ENCODE measurements at regions of chr6 and their contacts with region 1.

Region 1: DNA sequence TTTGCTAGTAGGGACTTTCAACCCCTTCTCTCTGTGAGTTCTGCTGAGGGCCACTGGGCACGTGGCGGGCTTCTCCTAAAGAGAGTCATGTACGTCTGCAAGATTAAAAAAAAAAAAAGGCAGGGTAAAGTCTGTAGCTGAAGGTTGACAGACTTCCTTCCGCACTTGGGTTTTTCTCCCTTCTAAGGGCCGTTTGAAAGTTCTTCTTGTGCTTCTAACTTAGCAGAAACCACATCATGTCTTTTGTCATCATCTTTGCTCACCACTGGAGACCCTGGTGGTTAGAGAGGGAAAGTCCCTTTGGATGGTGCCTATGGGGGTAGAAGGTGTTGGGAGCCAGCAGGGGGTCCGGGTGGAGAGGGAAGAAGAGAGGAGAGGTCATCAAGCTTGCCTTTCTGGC is 31.4 kb downstream of the PRDM1 start:
- DNase-seq: peak in 1 of 2 donors; percentile 90
- ATAC-seq: peak; percentile 86 to 92 (median 90)
- H3K4me3 ChIP-seq: no peak overlapping the region
- H3K4me3 Mint-ChIP-seq: peak overlapping the region; percentile 65
- H3K27ac ChIP-seq: peak overlapping the region; percentile 69
- H3K27ac Mint-ChIP-seq: peak overlapping the region; percentile 95
- H3K4me1 ChIP-seq: peaks cover 59% of the 10 kb centered on the region
- H3K4me1 Mint-ChIP-seq: peaks cover 59 to 66% of the 10 kb centered on the region in 2 donors
- H3K27me3 ChIP-seq: no peaks in the 10 kb centered on the region
- H3K27me3 Mint-ChIP-seq: no peaks in the 10 kb centered on the region
- CTCF ChIP-seq: no peak

Region 2: DNA sequence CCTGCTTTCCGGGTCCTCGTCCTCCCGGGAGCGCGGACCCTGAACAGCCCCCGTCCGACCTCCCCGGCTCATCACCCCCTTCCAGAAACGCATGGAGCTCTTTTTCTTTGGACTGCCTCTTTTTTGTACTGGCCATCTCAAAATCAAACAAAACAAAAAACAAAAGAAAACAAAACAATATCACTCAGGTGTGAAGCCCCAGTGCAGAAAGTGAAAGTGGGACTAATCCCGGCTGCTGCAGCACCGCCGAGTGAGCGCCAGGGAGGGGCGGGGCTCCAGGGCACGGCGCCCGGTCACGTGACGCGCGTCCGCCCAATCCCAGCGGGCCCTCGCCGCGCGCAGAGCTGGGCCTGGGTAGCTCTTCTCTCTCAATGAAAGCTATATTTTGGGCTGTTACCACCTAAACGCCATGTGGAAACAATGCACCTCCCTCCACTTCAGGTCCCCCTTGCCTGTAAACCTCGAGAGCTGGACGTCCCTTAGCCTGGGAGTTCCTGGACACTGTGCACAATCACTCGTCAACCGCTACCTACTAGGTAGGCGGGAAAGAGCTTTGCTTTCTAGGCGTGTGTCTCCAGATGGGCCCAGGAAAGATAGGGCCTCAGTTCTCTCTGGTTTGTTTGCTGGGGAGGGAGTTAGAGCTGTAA is 125.1 kb before region 1 on chr6:
- intact Hi-C with region 1: no loop called
- DNase-seq: peak; percentile 83 to 95
- ATAC-seq: peak; percentile 83 to 91 (median 90)
- H3K4me3 ChIP-seq: peak overlapping the region; percentile 88
- H3K4me3 Mint-ChIP-seq: peak overlapping the region; percentile 99
- H3K27ac ChIP-seq: peak overlapping the region; percentile 67
- H3K27ac Mint-ChIP-seq: peak overlapping the region; percentile 86 to 89
- H3K4me1 ChIP-seq: peaks cover 35% of the 10 kb centered on the region
- H3K4me1 Mint-ChIP-seq: peaks cover 33% of the 10 kb centered on the region in 2 donors
- H3K27me3 ChIP-seq: peaks cover 40% of the 10 kb centered on the region
- H3K27me3 Mint-ChIP-seq: peaks cover 53 to 66% of the 10 kb centered on the region in 2 donors
- CTCF ChIP-seq: no peak

Region 3: GRCh38 chr6:106069478-106069877 is 48.1 kb before region 1 on chr6:
- intact Hi-C with region 1: no loop called
- DNase-seq: no peak
- ATAC-seq: no peak
- H3K4me3 ChIP-seq: no peak overlapping the region
- H3K4me3 Mint-ChIP-seq: no peak overlapping the region
- H3K27ac ChIP-seq: no peak overlapping the region
- H3K27ac Mint-ChIP-seq: no peak overlapping the region
- H3K4me1 ChIP-seq: no peaks in the 10 kb centered on the region
- H3K4me1 Mint-ChIP-seq: no peaks in the 10 kb centered on the region
- H3K27me3 ChIP-seq: no peaks in the 10 kb centered on the region
- H3K27me3 Mint-ChIP-seq: peaks cover 9 to 11% of the 10 kb centered on the region in 2 donors
- CTCF ChIP-seq: no peak

Region 4: GRCh38 chr6:106128981-106129781 is 11.6 kb after region 1 on chr6:
- intact Hi-C with region 1: no loop called
- DNase-seq: no peak
- ATAC-seq: no peak
- H3K4me3 ChIP-seq: no peak overlapping the region
- H3K4me3 Mint-ChIP-seq: no peak overlapping the region
- H3K27ac ChIP-seq: no peak overlapping the region
- H3K27ac Mint-ChIP-seq: no peak overlapping the region
- H3K4me1 ChIP-seq: no peaks in the 10 kb centered on the region
- H3K4me1 Mint-ChIP-seq: peaks cover 0 to 3% of the 10 kb centered on the region in 2 donors
- H3K27me3 ChIP-seq: no peaks in the 10 kb centered on the region
- H3K27me3 Mint-ChIP-seq: no peaks in the 10 kb centered on the region
- CTCF ChIP-seq: no peak

Region 5: DNA sequence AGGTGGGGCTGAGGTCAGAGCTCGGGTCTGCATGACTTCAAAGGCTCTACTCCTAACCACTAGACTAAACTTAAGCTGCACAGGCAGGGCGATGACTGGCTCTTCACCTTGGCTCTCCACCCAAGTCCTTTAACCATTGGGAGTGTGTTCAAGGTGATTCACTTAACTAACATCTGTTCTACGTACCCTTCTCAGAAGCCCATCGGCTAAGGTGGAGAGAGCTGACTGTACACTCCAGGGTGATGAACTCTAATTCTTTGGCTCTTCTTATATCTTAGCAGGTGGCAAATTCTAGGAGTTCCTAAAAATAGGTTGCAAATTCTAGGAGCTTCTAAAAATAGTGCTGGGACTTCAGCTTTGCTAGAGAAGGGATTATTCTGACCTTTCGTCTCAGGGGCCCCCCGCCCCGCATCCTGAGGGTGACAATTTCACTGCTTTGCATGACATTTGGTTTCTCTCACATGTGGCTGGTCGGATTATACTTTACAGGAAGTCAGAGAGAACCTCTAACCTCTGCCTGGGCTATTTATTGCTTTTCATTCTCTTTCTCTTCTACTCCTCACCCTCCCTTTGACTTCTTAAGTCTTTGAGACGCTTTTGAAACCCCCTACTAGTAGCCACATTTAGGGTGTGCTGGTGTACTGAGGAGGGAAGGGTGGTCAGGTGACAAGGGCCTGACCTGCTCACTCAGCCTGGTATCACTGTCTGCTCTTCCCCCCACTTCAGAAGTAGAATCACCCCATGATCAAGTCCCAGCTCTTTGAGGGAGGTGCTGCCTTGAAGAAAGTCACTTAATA is 24.1 kb after region 1 on chr6:
- intact Hi-C with region 1: loop called (anchors 1 kb)
- DNase-seq: peak; percentile 38 to 56
- ATAC-seq: peak; percentile 71 to 84 (median 78)
- H3K4me3 ChIP-seq: no peak overlapping the region
- H3K4me3 Mint-ChIP-seq: peak overlapping the region; percentile 88
- H3K27ac ChIP-seq: peak overlapping the region; percentile 77
- H3K27ac Mint-ChIP-seq: peak overlapping the region; percentile 92 to 96
- H3K4me1 ChIP-seq: peaks cover 55% of the 10 kb centered on the region
- H3K4me1 Mint-ChIP-seq: peaks cover 59 to 72% of the 10 kb centered on the region in 2 donors
- H3K27me3 ChIP-seq: no peaks in the 10 kb centered on the region
- H3K27me3 Mint-ChIP-seq: no peaks in the 10 kb centered on the region
- CTCF ChIP-seq: no peak

Region 6: GRCh38 chr6:106163446-106163965 is 45.9 kb after region 1 on chr6:
- intact Hi-C with region 1: loop called (anchors 2 kb)
- DNase-seq: peak; percentile 48 to 72
- ATAC-seq: peak; percentile 45 to 63 (median 55)
- H3K4me3 ChIP-seq: no peak overlapping the region
- H3K4me3 Mint-ChIP-seq: peak overlapping the region; percentile 77
- H3K27ac ChIP-seq: peak overlapping the region; percentile 90
- H3K27ac Mint-ChIP-seq: peak overlapping the region; percentile 94 to 98
- H3K4me1 ChIP-seq: peaks cover 34% of the 10 kb centered on the region
- H3K4me1 Mint-ChIP-seq: peaks cover 63 to 65% of the 10 kb centered on the region in 2 donors
- H3K27me3 ChIP-seq: no peaks in the 10 kb centered on the region
- H3K27me3 Mint-ChIP-seq: no peaks in the 10 kb centered on the region
- CTCF ChIP-seq: no peak

Region 7: GRCh38 chr6:106194949-106195921 is 77.7 kb after region 1 on chr6:
- intact Hi-C with region 1: no loop called
- DNase-seq: peak in 1 of 2 donors; percentile 76
- ATAC-seq: peak; percentile 72 to 82 (median 73)
- H3K4me3 ChIP-seq: peak overlapping the region; percentile 24
- H3K4me3 Mint-ChIP-seq: peak overlapping the region; percentile 81
- H3K27ac ChIP-seq: peak overlapping the region; percentile 94
- H3K27ac Mint-ChIP-seq: peak overlapping the region; percentile 92 to 95
- H3K4me1 ChIP-seq: peaks cover 20% of the 10 kb centered on the region
- H3K4me1 Mint-ChIP-seq: peaks cover 50 to 53% of the 10 kb centered on the region in 2 donors
- H3K27me3 ChIP-seq: no peaks in the 10 kb centered on the region
- H3K27me3 Mint-ChIP-seq: no peaks in the 10 kb centered on the region
- CTCF ChIP-seq: no peak